CD8-positive, alpha-beta T cell (primary cell): ENCODE measurements at regions of chr16 and their contacts with region 1.

Region 1: DNA sequence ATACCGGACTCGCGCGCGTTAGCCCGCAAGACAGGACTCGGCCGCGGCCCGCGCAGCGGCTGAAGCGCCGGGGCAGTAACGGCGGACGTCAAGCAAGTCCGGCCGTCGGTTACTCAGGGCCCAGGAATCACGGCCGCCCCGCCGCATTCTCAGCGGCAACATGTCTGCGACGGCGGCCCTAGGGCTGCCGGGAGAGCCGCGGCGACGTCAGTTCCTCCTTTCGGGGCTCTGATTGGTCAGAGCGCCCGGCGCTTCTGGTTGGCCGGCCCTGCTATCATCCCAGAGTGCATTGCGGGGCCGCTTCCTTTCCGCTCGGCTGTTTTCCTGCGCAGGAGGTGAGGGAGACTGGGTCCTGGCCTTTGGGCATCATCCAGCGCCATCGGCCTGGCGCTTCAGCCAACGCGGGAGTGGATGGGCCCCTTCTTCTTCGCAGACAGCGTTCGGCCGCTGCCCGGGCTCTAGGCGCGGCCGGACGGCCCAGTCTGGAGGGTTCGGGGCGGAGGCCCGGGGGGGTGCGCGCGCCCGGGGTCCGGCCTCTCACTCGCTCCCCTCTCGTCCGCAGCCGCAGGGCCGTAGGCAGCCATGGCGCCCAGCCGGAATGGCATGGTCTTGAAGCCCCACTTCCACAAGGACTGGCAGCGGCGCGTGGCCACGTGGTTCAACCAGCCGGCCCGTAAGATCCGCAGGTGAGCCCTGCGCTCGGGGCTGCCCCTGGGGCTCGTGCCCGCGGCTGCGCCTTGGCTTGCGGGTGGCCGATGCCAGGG is at the start of gene RPL13:
- DNase-seq: peak; percentile 81 to 97 (median 93)
- ATAC-seq: peak; percentile 89
- H3K4me3 ChIP-seq: peak within 1 kb of the TSS; percentile 73 to 90
- H3K4me3 Mint-ChIP-seq: peak within 1 kb of the TSS; percentile 89
- H3K27ac ChIP-seq: peak within 1 kb of the TSS; percentile 90 to 97
- H3K27ac Mint-ChIP-seq: peak within 1 kb of the TSS; percentile 93
- H3K4me1 ChIP-seq: peaks cover 54% of the 10 kb centered on the region
- H3K4me1 Mint-ChIP-seq: peaks cover 51% of the 10 kb centered on the region
- H3K27me3 ChIP-seq: no peaks in the 10 kb centered on the region
- H3K27me3 Mint-ChIP-seq: no peaks in the 10 kb centered on the region
- CTCF ChIP-seq: no peak
- total RNA-seq, gene RPL13: 4,632 to 4,668 TPM

Region 2: GRCh38 chr16:88811769-88812512 is 748.6 kb before region 1 on chr16 and contains the start of gene APRT:
- CTCF ChIA-PET with region 1: no interaction called
- POLR2A ChIA-PET with region 1: no interaction called
- intact Hi-C with region 1: loop called in 1 of 2 experiments (anchors 5 kb)
- DNase-seq: peak; percentile 93 to 99 (median 97)
- ATAC-seq: peak; percentile 90
- H3K4me3 ChIP-seq: peak within 1 kb of the TSS; percentile 75 to 99
- H3K4me3 Mint-ChIP-seq: peak within 1 kb of the TSS; percentile 97
- H3K27ac ChIP-seq: peak within 1 kb of the TSS; percentile 71 to 87
- H3K27ac Mint-ChIP-seq: peak within 1 kb of the TSS; percentile 97
- H3K4me1 ChIP-seq: peaks cover 21% of the 10 kb centered on the region
- H3K4me1 Mint-ChIP-seq: peaks cover 19% of the 10 kb centered on the region
- H3K27me3 ChIP-seq: no peaks in the 10 kb centered on the region
- H3K27me3 Mint-ChIP-seq: no peaks in the 10 kb centered on the region
- CTCF ChIP-seq: no peak
- total RNA-seq, gene APRT: 171 to 178 TPM

Region 3: DNA sequence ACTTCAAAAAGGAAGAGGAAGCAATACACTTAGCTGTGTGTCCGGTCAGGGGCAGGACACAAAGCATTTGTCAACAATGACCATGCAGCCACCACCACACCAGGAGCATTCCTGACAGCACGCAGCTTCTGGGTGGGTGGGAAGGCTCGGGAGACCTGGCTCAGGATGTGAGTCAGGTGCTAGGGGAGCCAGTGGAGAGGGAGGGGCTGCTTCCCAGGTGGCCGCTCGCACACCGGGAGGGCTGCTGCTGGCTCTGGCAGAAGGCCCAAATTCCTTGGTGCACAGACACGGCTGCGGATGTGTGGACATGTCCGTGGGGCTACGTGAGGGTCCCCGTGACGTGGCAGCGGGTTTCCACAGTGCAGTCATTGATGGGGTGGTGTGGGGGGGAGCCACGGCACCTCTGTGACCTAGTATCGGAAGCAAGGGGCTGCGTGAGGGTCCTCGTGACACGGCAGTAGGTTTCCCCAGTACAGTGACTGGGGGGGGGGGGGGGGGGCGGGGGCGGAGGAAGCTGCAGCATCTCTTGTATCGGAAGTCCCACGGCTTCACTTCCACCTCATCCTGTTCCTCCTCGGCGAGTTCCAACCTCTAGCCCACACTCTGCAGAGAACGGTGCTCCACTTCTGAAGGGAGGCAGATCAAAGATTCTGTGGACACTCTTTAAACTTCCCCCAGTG is 230.2 kb before region 1 on chr16:
- CTCF ChIA-PET with region 1: no interaction called
- POLR2A ChIA-PET with region 1: no interaction called
- intact Hi-C with region 1: loop called (anchors 1 to 2 kb)
- DNase-seq: peak in 6 of 9 experiments; percentile 23 to 85 (median 51)
- ATAC-seq: peak; percentile 55
- H3K4me3 ChIP-seq: peak overlapping the region; percentile 16 to 43
- H3K4me3 Mint-ChIP-seq: peak overlapping the region; percentile 60
- H3K27ac ChIP-seq: peak overlapping the region; percentile 45 to 81
- H3K27ac Mint-ChIP-seq: peak overlapping the region; percentile 73
- H3K4me1 ChIP-seq: peaks cover 77% of the 10 kb centered on the region
- H3K4me1 Mint-ChIP-seq: peaks cover 83% of the 10 kb centered on the region
- H3K27me3 ChIP-seq: no peaks in the 10 kb centered on the region
- H3K27me3 Mint-ChIP-seq: no peaks in the 10 kb centered on the region
- CTCF ChIP-seq: no peak

Region 4: DNA sequence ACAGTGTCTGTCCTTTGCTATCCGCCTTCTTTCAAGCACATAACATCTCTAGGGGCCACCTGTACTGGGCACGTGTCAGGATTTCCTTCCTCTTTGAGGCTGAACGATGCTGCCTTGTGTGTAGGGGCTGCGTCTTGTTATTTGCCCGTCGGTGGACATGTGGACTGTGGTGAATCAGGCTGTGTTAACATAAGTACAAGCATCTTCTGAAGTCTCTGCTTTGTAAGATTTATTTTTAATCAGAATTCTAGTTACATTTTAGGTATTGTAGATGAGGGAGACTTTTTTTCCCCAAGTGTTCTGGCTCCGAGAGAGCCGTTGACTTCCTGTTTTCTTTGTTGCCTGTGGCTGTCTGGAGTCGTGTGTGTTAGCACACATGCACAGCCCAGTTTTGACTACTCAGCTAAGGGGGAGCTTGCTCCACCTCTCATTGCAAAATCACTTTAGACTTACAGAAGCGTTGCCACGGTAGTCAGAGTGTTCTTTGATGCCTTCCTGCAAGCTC is 26.3 kb before region 1 on chr16:
- CTCF ChIA-PET with region 1: interaction called, 7 read pairs
- POLR2A ChIA-PET with region 1: no interaction called
- intact Hi-C with region 1: loop called (anchors 1 kb)
- DNase-seq: peak; percentile 6 to 78 (median 59)
- ATAC-seq: peak; percentile 93
- H3K4me3 ChIP-seq: peak overlapping the region in 1 of 2 experiments; percentile 7
- H3K4me3 Mint-ChIP-seq: peak overlapping the region; percentile 55
- H3K27ac ChIP-seq: peak overlapping the region; percentile 9 to 49
- H3K27ac Mint-ChIP-seq: peak overlapping the region; percentile 94
- H3K4me1 ChIP-seq: peaks cover 24% of the 10 kb centered on the region
- H3K4me1 Mint-ChIP-seq: peaks cover 25% of the 10 kb centered on the region
- H3K27me3 ChIP-seq: no peaks in the 10 kb centered on the region
- H3K27me3 Mint-ChIP-seq: no peaks in the 10 kb centered on the region
- CTCF ChIP-seq: no peak

Region 5: GRCh38 chr16:89657442-89658220 is 97.1 kb after region 1 on chr16 and contains the starts of genes CHMP1A and SPATA33:
- CTCF ChIA-PET with region 1: no interaction called
- POLR2A ChIA-PET with region 1: no interaction called
- intact Hi-C with region 1: loop called in 1 of 2 experiments (anchors 1 kb)
- DNase-seq: peak; percentile 85 to 97 (median 91)
- ATAC-seq: peak; percentile 88
- H3K4me3 ChIP-seq: peak within 1 kb of the TSS; percentile 73 to 91
- H3K4me3 Mint-ChIP-seq: peak within 1 kb of the TSS; percentile 80
- H3K27ac ChIP-seq: peak within 1 kb of the TSS; percentile 81 to 85
- H3K27ac Mint-ChIP-seq: peak within 1 kb of the TSS; percentile 64
- H3K4me1 ChIP-seq: peaks cover 19% of the 10 kb centered on the region
- H3K4me1 Mint-ChIP-seq: peaks cover 29% of the 10 kb centered on the region
- H3K27me3 ChIP-seq: no peaks in the 10 kb centered on the region
- H3K27me3 Mint-ChIP-seq: no peaks in the 10 kb centered on the region
- CTCF ChIP-seq: no peak
- total RNA-seq, gene CHMP1A: 82.9 to 90.8 TPM
- total RNA-seq, gene SPATA33: 4.8 to 5.1 TPM

Region 6: DNA sequence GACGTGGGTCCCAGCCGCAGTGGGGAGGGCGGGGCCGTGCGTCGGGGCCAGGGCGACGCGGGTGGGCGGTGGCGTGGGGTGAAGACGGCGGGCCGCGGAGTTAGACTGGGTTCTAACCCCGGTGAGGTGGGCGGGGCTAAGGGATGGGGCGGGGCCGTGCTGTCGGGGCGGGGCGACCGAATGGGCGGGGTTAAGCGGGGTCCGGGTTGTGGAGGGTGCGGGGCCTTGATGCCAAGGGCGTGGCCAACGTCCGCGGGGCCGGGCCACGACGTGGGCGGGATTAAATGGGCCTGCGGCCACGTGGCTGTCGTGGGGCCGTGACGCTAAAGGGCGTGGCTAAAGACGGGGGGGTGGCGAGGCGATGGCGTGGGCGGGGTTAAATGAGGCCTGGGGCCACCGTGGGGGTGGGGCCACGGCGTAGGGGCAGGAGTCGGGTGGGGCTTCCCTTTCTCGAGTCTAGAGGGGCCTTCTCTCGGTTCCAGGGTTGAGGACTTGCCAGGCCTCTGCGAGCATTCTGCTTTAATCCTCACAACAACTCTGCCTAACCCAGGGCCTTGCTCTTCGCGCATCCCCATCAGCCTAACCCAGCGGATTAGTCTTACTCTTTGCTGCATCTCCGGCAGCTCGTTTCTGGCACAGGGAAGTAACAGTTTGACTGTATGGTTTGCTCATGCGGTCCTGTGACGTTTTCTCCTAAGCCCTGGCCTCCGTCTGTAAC is 313.6 kb after region 1 on chr16:
- CTCF ChIA-PET with region 1: no interaction called
- POLR2A ChIA-PET with region 1: no interaction called
- intact Hi-C with region 1: loop called (anchors 2 kb)
- DNase-seq: peak; percentile 86 to 99 (median 96)
- ATAC-seq: peak; percentile 77
- H3K4me3 ChIP-seq: peak overlapping the region; percentile 98
- H3K4me3 Mint-ChIP-seq: peak overlapping the region; percentile 90
- H3K27ac ChIP-seq: peak overlapping the region; percentile 100
- H3K27ac Mint-ChIP-seq: peak overlapping the region; percentile 99
- H3K4me1 ChIP-seq: peaks cover 23% of the 10 kb centered on the region
- H3K4me1 Mint-ChIP-seq: peaks cover 19% of the 10 kb centered on the region
- H3K27me3 ChIP-seq: no peaks in the 10 kb centered on the region
- H3K27me3 Mint-ChIP-seq: no peaks in the 10 kb centered on the region
- CTCF ChIP-seq: no peak